Body of pancreas (tissue), 4 donors: ENCODE measurements at regions of chr7 and their contacts with region 1.

Region 1: GRCh38 chr7:47979145-47979831 is at the start of gene HUS1:
- DNase-seq: peak; percentile 91 to 95 (median 94)
- ATAC-seq: peak; percentile 99
- H3K4me3 ChIP-seq: peak within 1 kb of the TSS; percentile 65 to 81
- H3K27ac ChIP-seq: peak within 1 kb of the TSS; percentile 79 to 87 (median 83)
- H3K4me1 ChIP-seq: peaks cover 11% of the 10 kb centered on the region
- H3K27me3 ChIP-seq: no peaks in the 10 kb centered on the region
- CTCF ChIP-seq: no peak
- POLR2A ChIP-seq: peak; percentile 74 to 92 (median 91)
- total RNA-seq, gene HUS1: 15.2 to 16.9 TPM

Region 2: GRCh38 chr7:47846117-47846836 is 133.0 kb before region 1 on chr7:
- intact Hi-C with region 1: no loop called
- DNase-seq: no peak
- ATAC-seq: no peak
- H3K4me3 ChIP-seq: no peak overlapping the region
- H3K27ac ChIP-seq: no peak overlapping the region
- H3K4me1 ChIP-seq: no peaks in the 10 kb centered on the region
- H3K27me3 ChIP-seq: no peaks in the 10 kb centered on the region
- CTCF ChIP-seq: no peak
- POLR2A ChIP-seq: no peak

Region 3: GRCh38 chr7:48035301-48035966 is 56.1 kb after region 1 on chr7 and contains the start of gene C7orf57:
- intact Hi-C with region 1: no loop called
- DNase-seq: peak; percentile 91 to 93 (median 92)
- ATAC-seq: peak; percentile 100
- H3K4me3 ChIP-seq: peak within 1 kb of the TSS; percentile 39 to 43
- H3K27ac ChIP-seq: no peak within 1 kb of the TSS
- H3K4me1 ChIP-seq: peaks cover 10% of the 10 kb centered on the region
- H3K27me3 ChIP-seq: peaks cover 0 to 9% of the 10 kb centered on the region in 2 donors
- CTCF ChIP-seq: peak in 2 of 7 experiments; percentile 28 to 38
- POLR2A ChIP-seq: no peak
- total RNA-seq, gene C7orf57: 0.26 TPM in 1 of 2 donors, not detected in the other

Region 4: DNA sequence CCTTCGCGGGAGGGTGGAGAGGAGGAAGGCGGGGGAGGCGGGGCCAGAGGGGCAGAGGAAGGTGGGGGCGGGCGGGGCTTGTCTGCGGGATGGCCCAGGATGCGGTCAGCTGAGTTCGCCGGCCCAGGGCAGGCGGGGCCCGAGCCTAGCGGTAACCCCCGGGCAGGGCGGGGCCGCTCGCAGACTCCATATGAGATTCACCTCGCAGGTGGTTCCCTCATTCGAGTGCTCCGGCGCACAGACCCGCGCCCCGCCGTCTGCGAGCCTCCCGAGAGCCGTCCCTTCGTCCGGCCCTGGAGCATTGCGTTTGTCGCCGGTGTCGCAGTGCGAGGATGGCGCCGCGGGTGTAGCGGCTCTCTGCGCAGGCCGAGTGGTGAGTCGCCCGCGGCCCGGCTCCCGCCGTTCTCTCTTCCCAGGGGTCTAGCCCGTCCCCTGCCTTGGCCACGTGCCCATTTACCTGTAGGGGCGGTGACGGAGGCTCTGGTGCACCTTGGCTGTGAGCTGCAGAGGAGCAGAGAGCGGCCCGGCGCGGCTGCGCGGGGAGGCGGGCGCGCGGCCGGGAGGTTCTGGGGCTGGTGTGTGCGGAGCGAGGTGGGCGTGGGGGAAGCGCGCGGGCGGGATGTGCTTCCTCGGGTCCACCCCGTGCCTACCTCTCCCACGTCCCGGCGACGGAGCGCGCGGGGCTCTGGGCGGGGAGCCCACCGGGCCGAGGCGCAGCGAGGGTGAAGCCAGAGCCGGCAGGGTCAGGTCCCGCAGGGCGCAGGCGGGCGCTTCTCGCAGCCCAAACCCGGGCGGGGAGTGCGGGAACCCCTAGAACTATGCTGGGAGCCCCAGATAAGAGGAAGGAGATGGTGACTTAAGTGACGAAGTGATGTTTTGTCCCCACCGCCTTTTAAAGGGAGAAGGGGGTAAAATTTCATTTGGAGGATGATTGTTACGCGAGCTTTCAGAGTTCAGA is 110.0 kb after region 1 on chr7 and contains the start of gene UPP1:
- intact Hi-C with region 1: loop called (anchors 5 kb)
- DNase-seq: peak; percentile 66 to 74 (median 70)
- ATAC-seq: peak; percentile 29
- H3K4me3 ChIP-seq: peak within 1 kb of the TSS; percentile 79 to 97
- H3K27ac ChIP-seq: peak within 1 kb of the TSS; percentile 97 to 99 (median 98)
- H3K4me1 ChIP-seq: peaks cover 20% of the 10 kb centered on the region
- H3K27me3 ChIP-seq: no peaks in the 10 kb centered on the region
- CTCF ChIP-seq: peak in 2 of 7 experiments; percentile 6 to 13
- POLR2A ChIP-seq: peak; percentile 72 to 88 (median 84)
- total RNA-seq, gene UPP1: 7.3 to 9.9 TPM